ENCODE measurements at regions of chr6 and their contacts with region 1.

Region 1: GRCh38 chr6:168884646-168885086 is 369.0 kb downstream of the THBS2 start:
- DNase-seq: peak; percentile 80 to 87
- H3K4me3 ChIP-seq: peak overlapping the region; percentile 13 to 41 (median 18)
- H3K27ac ChIP-seq: no peak overlapping the region
- H3K4me1 ChIP-seq: peaks cover 0 to 9% (median 2%) of the 10 kb centered on the region in 4 donors
- H3K27me3 ChIP-seq: peaks cover 0 to 4% (median 3%) of the 10 kb centered on the region in 3 donors
- CTCF ChIP-seq: peak in 5 of 7 experiments; percentile 84 to 96 (median 90)
- EP300 ChIP-seq: no peak
- POLR2A ChIP-seq: no peak

Region 2: DNA sequence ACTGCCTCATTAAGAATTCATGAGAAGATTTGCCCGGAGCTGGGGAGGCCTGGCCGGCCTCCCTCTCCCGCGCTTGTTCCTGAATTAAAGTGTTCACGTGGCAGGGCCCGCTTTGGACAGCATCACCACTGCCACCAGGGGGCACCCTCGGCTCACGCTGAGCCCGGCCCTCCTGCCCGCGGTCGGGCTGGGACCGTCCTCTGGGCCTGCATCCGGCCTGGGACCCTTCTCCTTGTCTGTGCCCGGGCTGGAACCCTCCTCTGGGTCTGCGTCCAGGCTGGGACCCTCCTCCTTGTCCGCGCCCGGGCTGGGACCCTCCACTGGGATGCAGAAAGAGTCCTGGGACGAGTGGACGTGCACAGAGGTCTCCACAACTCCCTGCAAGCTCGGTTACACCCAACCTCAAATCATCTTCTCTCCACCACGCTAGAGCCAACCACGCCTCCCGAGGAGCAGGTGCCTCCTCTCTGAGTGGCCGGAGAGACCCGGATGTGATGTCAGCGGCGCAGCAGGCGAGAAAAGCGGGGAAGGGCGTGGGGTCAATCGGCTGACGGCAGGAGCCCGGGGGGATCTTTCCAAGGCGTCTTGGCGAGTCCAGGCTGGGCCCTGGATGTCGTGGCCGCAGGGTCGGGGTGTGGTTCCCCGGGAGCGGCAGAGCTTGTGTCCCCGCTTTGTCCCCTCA is 514.2 kb before region 1 on chr6:
- intact Hi-C with region 1: loop called (anchors 5 kb)
- DNase-seq: peak; percentile 84 to 90
- H3K4me3 ChIP-seq: no peak overlapping the region
- H3K27ac ChIP-seq: peak overlapping the region in 1 of 5 donors; percentile 18
- H3K4me1 ChIP-seq: peaks cover 0 to 27% (median 13%) of the 10 kb centered on the region in 4 donors
- H3K27me3 ChIP-seq: no peaks in the 10 kb centered on the region
- CTCF ChIP-seq: peak in 5 of 7 experiments; percentile 72 to 91 (median 86)
- EP300 ChIP-seq: no peak
- POLR2A ChIP-seq: no peak

Region 3: GRCh38 chr6:168713834-168714233 is 170.8 kb before region 1 on chr6:
- intact Hi-C with region 1: no loop called
- DNase-seq: peak; percentile 59 to 61
- H3K4me3 ChIP-seq: no peak overlapping the region
- H3K27ac ChIP-seq: no peak overlapping the region
- H3K4me1 ChIP-seq: no peaks in the 10 kb centered on the region
- H3K27me3 ChIP-seq: no peaks in the 10 kb centered on the region
- CTCF ChIP-seq: peak in 3 of 7 experiments; percentile 19 to 36 (median 28)
- EP300 ChIP-seq: no peak
- POLR2A ChIP-seq: no peak

Measured in stomach (tissue), 19 donors.